ENCODE measurements at regions of chrX and their contacts with region 1.

Region 1: DNA sequence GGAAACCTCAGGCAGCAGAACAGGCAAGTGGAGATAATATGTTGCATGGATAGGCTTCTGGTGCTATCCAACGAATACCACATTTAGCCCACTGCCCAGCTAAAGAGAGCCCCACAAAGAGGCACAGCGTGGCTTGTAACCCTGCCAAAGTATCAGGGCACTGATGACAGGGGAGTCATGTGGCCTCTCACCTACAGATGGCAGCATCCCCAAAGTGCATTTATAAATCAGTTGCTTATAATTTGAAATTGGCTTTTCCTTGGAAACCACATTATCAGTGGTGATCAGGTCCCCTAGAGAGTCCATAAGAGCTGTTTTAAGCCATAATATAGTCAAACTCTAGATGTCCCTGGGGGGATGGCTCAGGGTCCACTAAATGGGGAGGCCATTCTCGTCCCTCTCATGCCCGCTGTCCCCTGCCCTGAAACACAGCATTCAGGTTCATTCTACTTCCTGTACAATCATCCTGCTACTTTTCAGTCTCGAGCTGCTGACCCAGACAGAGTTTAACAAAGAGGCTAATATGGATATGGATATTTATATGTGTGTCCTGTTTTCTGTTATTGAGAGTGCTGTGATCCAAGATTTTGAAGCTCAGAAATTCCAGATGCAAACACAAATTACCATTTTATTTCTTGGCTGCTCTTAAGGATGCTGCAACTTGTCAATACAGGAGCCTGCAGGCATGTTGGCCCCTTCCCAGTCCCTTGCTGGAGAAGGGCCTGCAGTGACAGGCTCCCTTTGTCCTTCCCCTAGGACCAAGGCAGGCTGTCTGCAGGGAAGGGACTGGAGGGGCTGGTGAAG is 28.5 kb downstream of the SRPX start:
- DNase-seq: peak in 1 of 2 experiments; percentile 14
- ATAC-seq: peak; percentile 54 to 74; a peak in 3 of 6 replicates
- H3K4me3 ChIP-seq: no peak overlapping the region
- H3K27ac ChIP-seq: no peak overlapping the region
- H3K4me1 ChIP-seq: no peaks in the 10 kb centered on the region
- CTCF ChIP-seq: peak; percentile 48
- EP300 ChIP-seq: no peak
- POLR2A ChIP-seq: no peak
- RAD21 ChIP-seq: peak; percentile 50 to 54

Region 2: DNA sequence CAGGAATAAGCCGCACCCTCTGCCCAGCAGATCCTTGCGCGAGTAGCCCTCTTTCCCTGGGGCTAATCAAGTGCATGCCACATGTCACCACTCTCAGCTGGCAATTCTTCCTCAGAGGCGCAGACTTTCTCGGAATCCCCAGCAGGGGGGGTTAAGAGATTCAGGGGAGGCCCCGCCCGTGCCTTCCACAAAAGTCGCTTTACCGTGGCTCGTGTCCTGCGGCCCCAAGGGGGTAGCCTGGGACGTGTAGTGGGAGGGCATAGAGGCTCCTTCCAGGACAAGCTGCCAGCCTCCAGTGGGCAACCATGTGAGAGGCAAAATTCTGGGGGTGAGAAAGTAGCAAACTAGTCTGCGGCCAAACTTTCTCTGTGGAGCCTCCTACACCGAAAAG is 27.8 kb after region 1 on chrX:
- CTCF ChIA-PET with region 1: interaction called, 17 read pairs
- POLR2A ChIA-PET with region 1: no interaction called
- DNase-seq: peak; percentile 21 to 52
- ATAC-seq: peak; percentile 77 to 83
- H3K4me3 ChIP-seq: peak overlapping the region; percentile 45
- H3K27ac ChIP-seq: peak overlapping the region in 1 of 2 experiments; percentile 75; a peak in 3 of 6 replicates
- H3K4me1 ChIP-seq: peaks cover 7% of the 10 kb centered on the region; the same call in 1 of the 3 replicates
- CTCF ChIP-seq: no peak; the same call in 2 of the 3 replicates
- EP300 ChIP-seq: no peak
- POLR2A ChIP-seq: no peak
- RAD21 ChIP-seq: peak; percentile 9 to 31; a peak in 1 of 5 replicates

Region 3: GRCh38 chrX:38282044-38282443 is 89.8 kb after region 1 on chrX:
- CTCF ChIA-PET with region 1: interaction called, 15 read pairs
- POLR2A ChIA-PET with region 1: no interaction called
- DNase-seq: peak in 1 of 2 experiments; percentile 4
- ATAC-seq: peak in 1 of 2 experiments; percentile 62; a peak in 4 of 6 replicates
- H3K4me3 ChIP-seq: no peak overlapping the region
- H3K27ac ChIP-seq: no peak overlapping the region
- H3K4me1 ChIP-seq: peaks cover 28% of the 10 kb centered on the region
- CTCF ChIP-seq: peak; percentile 25; the same call in 2 of the 3 replicates
- EP300 ChIP-seq: no peak
- POLR2A ChIP-seq: no peak
- RAD21 ChIP-seq: peak; percentile 22 to 34; a peak in 1 of 5 replicates

Measured in A549 (cell line).